ENCODE measurements at regions of chr2 and their contacts with region 1.

Region 1: GRCh38 chr2:27010139-27010538 is 22.6 kb upstream of the TMEM214 start:
- DNase-seq: no peak
- ATAC-seq: no peak
- H3K4me3 ChIP-seq: no peak overlapping the region
- H3K27ac ChIP-seq: peak overlapping the region; percentile 43
- H3K4me1 ChIP-seq: peaks cover 23% of the 10 kb centered on the region
- H3K27me3 ChIP-seq: no peaks in the 10 kb centered on the region
- CTCF ChIP-seq: no peak

Region 2: GRCh38 chr2:26970244-26970920 is 39.8 kb before region 1 on chr2 and contains the start of gene MAPRE3:
- CTCF ChIA-PET with region 1: no interaction called
- POLR2A ChIA-PET with region 1: interaction called, 5 read pairs
- intact Hi-C with region 1: loop called (anchors 2 kb)
- DNase-seq: peak; percentile 76
- ATAC-seq: peak; percentile 77
- H3K4me3 ChIP-seq: peak within 1 kb of the TSS; percentile 93
- H3K27ac ChIP-seq: peak within 1 kb of the TSS; percentile 98
- H3K4me1 ChIP-seq: peaks cover 49% of the 10 kb centered on the region
- H3K27me3 ChIP-seq: no peaks in the 10 kb centered on the region
- CTCF ChIP-seq: no peak
- total RNA-seq, gene MAPRE3: 11.9 and 15.6 TPM in 2 replicates

Measured in PC-3 (cell line).